Activated B cell treated with CpG ODN at 0.5 μM for 24 hours (primary cell): ENCODE measurements at regions of chr19 and their contacts with region 1.

Region 1: GRCh38 chr19:18097217-18097992 is at the start of gene MAST3:
- DNase-seq: peak; percentile 95
- ATAC-seq: peak; percentile 72
- H3K4me3 Mint-ChIP-seq: peak within 1 kb of the TSS; percentile 95
- H3K27ac Mint-ChIP-seq: peak within 1 kb of the TSS; percentile 96
- H3K4me1 Mint-ChIP-seq: peaks cover 43% of the 10 kb centered on the region
- H3K27me3 Mint-ChIP-seq: no peaks in the 10 kb centered on the region
- CTCF ChIP-seq: no peak
- total RNA-seq, gene MAST3: 44.3 and 48.6 TPM in 2 replicates

Region 2: DNA sequence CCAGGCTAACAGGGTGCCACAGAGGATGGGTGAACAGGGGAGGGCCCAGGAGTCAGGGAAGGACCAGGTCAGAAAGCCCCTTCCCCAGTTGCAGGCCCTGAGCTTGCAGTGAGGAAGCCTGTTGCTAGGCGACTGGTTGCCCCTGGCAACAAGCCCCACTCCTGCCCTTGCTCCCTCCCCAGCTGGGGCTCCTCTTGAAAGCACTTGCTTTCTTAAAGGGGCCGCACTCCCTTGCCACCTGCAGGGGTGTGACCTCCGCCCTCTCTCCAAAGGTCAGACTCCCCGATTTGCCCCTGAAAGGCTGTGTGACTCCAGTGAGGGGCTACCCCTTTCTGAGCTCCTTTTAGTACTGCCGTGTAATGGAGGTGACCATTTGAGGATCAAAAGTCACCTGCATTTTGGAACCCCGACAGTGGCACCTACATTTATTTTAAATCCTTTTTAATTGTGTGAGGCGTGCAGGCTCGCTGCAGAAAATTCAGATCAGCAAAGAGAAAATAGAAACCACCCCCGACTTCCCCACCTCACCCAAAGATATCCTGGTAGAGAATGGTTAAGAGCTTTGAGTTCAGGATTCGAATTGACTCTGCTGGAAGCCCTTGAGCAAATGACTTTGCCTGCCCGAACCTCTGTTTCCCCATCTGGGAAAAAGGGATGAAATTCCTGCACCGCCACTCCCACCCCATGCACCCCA is 341.3 kb before region 1 on chr19:
- CTCF ChIA-PET with region 1: no interaction called
- POLR2A ChIA-PET with region 1: interaction called, 3 read pairs
- intact Hi-C with region 1: loop called (anchors 10 kb)
- DNase-seq: peak; percentile 61
- ATAC-seq: no peak
- H3K4me3 Mint-ChIP-seq: peak overlapping the region; percentile 46
- H3K27ac Mint-ChIP-seq: peak overlapping the region; percentile 90
- H3K4me1 Mint-ChIP-seq: peaks cover 84% of the 10 kb centered on the region
- H3K27me3 Mint-ChIP-seq: no peaks in the 10 kb centered on the region
- CTCF ChIP-seq: no peak

Region 3: DNA sequence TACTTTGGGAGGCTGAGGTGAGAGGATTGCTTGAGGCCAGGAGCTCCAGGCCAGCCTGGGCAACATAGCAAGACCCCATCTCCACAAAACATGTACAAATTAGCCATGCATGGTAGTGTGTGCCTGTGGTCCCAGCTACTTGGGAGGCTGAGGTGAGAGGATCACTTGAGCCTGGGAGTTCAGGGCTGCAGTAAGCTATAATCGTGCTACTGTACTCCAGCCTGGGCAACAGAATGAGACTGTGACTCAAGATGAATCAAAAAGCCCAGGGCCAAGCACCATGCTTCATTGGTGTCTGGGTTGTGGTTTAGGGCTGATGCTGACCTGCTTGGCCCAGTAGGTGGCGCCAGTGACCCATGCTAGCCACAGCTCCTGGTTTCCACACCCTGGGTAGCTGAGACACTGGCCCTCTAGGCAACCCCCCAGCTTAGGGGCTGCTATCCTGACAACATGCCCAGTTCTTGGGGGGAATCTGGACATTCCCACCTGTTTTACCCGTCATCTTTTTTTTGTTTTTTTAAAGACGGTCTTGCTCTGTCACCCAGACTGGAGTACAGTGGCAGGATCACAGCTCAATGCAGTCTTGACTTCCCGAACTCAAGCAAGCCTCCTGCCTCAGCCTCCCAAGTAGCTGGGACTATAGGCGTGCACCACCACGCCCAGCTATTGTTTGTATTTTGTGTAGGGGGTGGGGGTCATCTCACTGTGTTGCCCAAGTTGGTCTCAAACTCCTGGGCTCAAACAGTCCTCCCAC is 159.1 kb before region 1 on chr19:
- CTCF ChIA-PET with region 1: no interaction called
- POLR2A ChIA-PET with region 1: no interaction called
- intact Hi-C with region 1: no loop called
- DNase-seq: peak; percentile 78
- ATAC-seq: peak; percentile 98
- H3K4me3 Mint-ChIP-seq: no peak overlapping the region
- H3K27ac Mint-ChIP-seq: no peak overlapping the region
- H3K4me1 Mint-ChIP-seq: peaks cover 10% of the 10 kb centered on the region
- H3K27me3 Mint-ChIP-seq: no peaks in the 10 kb centered on the region
- CTCF ChIP-seq: no peak

Region 4: DNA sequence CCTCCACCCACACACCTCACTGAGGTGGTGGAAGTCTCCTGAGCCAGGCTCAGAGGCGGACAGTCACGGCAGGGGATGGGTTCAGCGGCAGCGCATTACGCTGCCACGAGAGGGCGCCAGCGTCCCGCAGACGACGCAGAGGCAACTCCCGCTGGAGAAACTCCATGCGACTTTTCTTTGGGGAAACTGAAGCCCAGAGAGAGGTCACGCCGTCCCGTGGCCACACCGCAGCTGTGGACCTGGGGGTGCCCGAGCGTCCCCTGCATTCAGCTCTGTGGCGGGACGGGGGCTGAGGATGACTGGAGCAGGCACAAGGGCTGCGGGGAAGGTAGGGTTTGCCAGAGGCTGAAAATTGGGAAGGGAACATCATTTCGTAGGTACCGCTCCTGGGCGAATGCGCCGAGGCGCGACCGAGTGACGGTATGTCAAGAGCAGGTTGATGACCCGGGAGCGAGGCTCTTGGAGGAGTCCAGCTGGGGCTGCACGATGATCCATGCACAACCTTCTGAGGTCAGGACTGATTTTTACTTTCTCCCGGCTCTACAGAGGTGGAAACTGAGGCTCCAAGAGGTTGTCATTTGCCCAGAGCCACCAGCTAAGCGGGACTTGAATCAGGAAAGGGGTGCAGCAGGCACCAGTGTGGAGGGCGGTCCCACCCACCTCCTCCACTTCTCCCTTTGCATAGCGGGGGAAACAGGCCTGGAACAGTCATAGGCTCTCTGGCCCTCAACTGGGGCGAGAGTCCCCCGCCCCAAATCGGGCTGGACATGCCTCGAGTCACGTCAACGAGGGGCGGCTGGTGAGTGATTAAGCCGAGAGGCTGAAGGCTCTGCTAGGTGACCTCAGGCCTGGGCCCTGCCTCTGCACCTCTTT is 90.1 kb before region 1 on chr19:
- CTCF ChIA-PET with region 1: interaction called, 6 read pairs
- POLR2A ChIA-PET with region 1: interaction called, 22 read pairs
- intact Hi-C with region 1: no loop called
- DNase-seq: peak; percentile 83
- ATAC-seq: peak; percentile 61
- H3K4me3 Mint-ChIP-seq: peak overlapping the region; percentile 93
- H3K27ac Mint-ChIP-seq: peak overlapping the region; percentile 92
- H3K4me1 Mint-ChIP-seq: peaks cover 40% of the 10 kb centered on the region
- H3K27me3 Mint-ChIP-seq: no peaks in the 10 kb centered on the region
- CTCF ChIP-seq: peak; percentile 84

Region 5: GRCh38 chr19:18044825-18045304 is 52.5 kb before region 1 on chr19:
- CTCF ChIA-PET with region 1: no interaction called
- POLR2A ChIA-PET with region 1: interaction called, 21 read pairs
- intact Hi-C with region 1: no loop called
- DNase-seq: peak; percentile 72
- ATAC-seq: peak; percentile 92
- H3K4me3 Mint-ChIP-seq: peak overlapping the region; percentile 78
- H3K27ac Mint-ChIP-seq: peak overlapping the region; percentile 96
- H3K4me1 Mint-ChIP-seq: peaks cover 55% of the 10 kb centered on the region
- H3K27me3 Mint-ChIP-seq: no peaks in the 10 kb centered on the region
- CTCF ChIP-seq: no peak

Region 6: GRCh38 chr19:18070181-18070580 is 27.2 kb before region 1 on chr19:
- CTCF ChIA-PET with region 1: no interaction called
- POLR2A ChIA-PET with region 1: no interaction called
- intact Hi-C with region 1: no loop called
- DNase-seq: no peak
- ATAC-seq: no peak
- H3K4me3 Mint-ChIP-seq: no peak overlapping the region
- H3K27ac Mint-ChIP-seq: no peak overlapping the region
- H3K4me1 Mint-ChIP-seq: no peaks in the 10 kb centered on the region
- H3K27me3 Mint-ChIP-seq: no peaks in the 10 kb centered on the region
- CTCF ChIP-seq: no peak

Region 7: GRCh38 chr19:18109733-18110595 is 12.6 kb after region 1 on chr19:
- CTCF ChIA-PET with region 1: interaction called, 3 read pairs
- POLR2A ChIA-PET with region 1: interaction called, 146 read pairs
- intact Hi-C with region 1: loop called (anchors 1 kb)
- DNase-seq: peak; percentile 62
- ATAC-seq: peak; percentile 57
- H3K4me3 Mint-ChIP-seq: peak overlapping the region; percentile 80
- H3K27ac Mint-ChIP-seq: peak overlapping the region; percentile 83
- H3K4me1 Mint-ChIP-seq: peaks cover 54% of the 10 kb centered on the region
- H3K27me3 Mint-ChIP-seq: no peaks in the 10 kb centered on the region
- CTCF ChIP-seq: no peak

Region 8: DNA sequence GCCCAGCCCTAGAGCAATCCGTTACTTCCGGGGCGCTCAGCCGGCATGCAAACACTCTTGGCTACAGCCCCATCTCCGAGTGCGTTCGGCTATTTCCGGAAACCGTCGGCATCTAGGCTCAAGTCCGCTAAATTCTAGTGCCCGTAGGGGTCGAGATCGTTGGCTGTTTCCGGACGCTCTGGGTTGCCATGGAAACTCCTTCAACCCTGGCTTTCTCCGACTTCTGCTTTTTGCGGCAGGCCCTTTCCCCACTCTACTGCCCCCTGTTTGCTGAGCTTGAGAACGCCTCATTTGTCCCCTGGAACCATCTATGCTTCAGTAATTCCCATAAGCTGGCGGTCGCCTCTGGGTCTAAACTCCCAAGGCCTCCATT is 55.0 kb after region 1 on chr19:
- CTCF ChIA-PET with region 1: no interaction called
- POLR2A ChIA-PET with region 1: interaction called, 14 read pairs
- intact Hi-C with region 1: loop called (anchors 1 kb)
- DNase-seq: peak; percentile 97
- ATAC-seq: peak; percentile 70
- H3K4me3 Mint-ChIP-seq: peak overlapping the region; percentile 89
- H3K27ac Mint-ChIP-seq: peak overlapping the region; percentile 94
- H3K4me1 Mint-ChIP-seq: peaks cover 22% of the 10 kb centered on the region
- H3K27me3 Mint-ChIP-seq: no peaks in the 10 kb centered on the region
- CTCF ChIP-seq: no peak